ENCODE measurements at regions of chr4 and their contacts with region 1.

Region 1: DNA sequence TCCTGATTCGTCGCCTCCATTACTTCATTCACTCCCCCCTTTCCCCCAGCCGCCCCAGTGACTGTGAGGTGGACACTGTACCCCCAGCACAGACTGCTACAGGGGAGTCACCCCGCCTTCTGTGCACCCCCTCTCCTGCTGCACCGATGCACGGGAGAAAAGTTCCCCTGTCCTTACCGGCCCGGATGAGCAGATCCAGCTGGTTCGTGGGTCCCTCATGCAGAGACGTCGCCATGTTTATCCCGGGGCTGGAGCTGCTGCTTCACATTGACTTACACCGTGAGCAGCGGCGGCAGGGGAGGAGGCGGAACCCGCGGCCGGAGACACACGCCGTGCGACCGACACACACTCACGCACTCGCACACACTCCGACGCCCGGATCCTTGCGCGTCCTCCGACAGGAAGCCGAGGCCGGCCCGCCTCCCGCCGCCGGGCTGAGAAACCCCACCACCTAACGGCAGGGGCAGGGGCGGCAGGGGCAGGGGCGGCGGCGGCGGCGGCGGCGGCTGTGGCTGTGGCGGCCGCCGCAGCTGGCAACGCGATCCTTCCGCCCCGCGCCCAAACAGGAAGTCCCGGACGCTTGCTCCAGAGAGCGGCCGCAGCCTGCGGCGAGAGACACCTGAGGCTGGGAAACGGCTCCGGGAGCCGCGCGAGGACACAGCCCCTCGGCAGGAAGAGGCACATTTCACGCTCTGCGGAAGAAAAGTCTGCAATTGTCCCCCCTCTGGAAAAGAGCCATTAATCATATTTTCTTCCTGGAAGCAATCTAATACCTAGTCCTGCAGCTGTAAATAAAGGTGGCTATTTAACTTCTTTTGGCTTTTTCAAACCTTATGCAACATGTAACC is 68.6 kb downstream of the NOCT start:
- DNase-seq: peak; percentile 94
- H3K4me3 ChIP-seq: peak overlapping the region; percentile 70 to 92 (median 79)
- H3K27ac ChIP-seq: peak overlapping the region; percentile 92 to 97 (median 94)
- H3K4me1 ChIP-seq: peaks cover 0 to 43% (median 37%) of the 10 kb centered on the region in 4 donors
- H3K27me3 ChIP-seq: no peaks in the 10 kb centered on the region
- CTCF ChIP-seq: peak in 1 of 4 experiments; percentile 27
- EP300 ChIP-seq: no peak
- POLR2A ChIP-seq: peak; percentile 43 to 57

Region 2: DNA sequence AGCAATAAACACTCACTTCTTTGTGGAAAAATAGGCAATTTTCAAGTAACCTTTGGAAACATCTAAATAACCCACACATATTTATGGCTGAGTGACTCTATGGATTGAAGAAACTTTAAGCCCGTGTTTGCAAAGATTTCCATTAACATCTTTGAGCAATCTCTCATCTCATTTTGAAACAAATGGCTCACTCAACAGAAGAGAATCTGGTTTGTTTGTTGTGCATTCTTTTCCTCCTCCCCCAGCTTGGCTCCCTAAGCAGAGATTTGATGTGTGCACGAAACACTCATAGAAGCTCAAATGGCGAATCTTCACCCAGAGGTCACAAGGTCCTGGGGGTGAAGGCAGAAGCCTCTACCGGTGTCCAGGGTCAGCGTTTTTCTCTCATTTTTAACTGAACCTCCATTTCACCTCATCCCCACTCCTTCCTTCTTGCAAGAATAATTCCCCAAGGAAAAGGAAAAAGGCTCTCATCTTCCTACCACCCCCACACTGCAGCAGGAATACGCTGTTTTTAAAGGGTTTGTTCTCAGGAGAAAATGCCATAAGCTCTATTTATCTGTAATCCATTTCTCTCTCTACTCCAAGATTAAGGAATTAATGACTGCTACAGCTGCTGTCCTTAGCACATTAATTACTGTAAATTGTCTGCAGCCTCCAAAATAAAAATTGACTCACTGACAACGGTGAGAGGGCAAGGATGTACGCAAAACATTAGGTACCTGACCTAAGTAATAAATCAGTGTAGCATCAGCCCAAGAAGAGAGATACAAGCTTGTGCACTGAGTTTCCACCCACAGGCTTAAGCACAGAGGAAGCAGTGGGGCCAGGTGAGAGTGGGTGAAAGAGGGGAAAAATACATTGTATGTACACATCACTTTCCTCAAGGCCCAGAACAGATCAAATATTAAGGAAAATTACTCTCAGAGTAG is 376.2 kb before region 1 on chr4:
- intact Hi-C with region 1: no loop called
- DNase-seq: no peak
- H3K4me3 ChIP-seq: no peak overlapping the region
- H3K27ac ChIP-seq: no peak overlapping the region
- H3K4me1 ChIP-seq: no peaks in the 10 kb centered on the region
- H3K27me3 ChIP-seq: no peaks in the 10 kb centered on the region
- CTCF ChIP-seq: no peak
- EP300 ChIP-seq: no peak
- POLR2A ChIP-seq: no peak

Region 3: DNA sequence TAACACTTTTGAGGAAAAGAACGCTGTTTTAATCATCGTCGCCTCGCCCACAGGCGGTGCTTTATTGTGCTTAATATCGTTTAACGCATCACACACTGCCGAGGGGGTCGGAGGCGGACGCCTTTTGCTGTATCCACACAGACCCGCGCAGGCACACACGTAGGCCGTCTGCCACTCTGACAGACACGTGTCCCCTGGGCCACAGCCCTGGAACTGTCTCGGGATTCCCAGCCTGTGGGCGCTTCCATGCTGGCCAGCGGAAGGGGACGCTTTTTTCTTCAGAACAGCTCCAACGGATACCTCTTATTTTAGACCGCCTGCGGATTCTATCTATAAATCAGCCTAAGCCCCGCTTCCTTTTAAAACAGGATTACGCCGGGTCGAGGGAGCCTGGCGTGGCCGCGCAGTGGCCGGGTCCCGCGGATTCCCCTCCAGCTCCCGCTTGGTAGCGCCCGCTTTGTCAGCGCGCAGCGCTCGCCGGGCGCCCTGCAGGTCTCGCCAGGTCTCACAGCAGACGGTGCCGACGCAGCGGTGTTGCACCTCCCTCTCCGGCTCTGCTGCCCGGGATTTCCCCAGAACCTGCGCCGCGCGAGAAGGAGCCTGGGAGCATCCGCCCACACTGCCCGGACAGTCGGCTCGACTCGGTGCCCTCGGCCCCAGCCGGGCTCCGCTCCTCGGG is 68.8 kb before region 1 on chr4 and contains the start of gene NOCT:
- intact Hi-C with region 1: no loop called
- DNase-seq: peak; percentile 91
- H3K4me3 ChIP-seq: peak within 1 kb of the TSS; percentile 58 to 82 (median 68)
- H3K27ac ChIP-seq: peak within 1 kb of the TSS; percentile 79 to 93 (median 82)
- H3K4me1 ChIP-seq: peaks cover 0 to 29% (median 12%) of the 10 kb centered on the region in 4 donors
- H3K27me3 ChIP-seq: no peaks in the 10 kb centered on the region
- CTCF ChIP-seq: peak in 2 of 4 experiments; percentile 11 to 43
- EP300 ChIP-seq: no peak
- POLR2A ChIP-seq: peak; percentile 58 to 67
- total RNA-seq, gene NOCT: 1.8 to 5.4 (median 2.5) TPM

Region 4: GRCh38 chr4:139042981-139043460 is 41.2 kb before region 1 on chr4:
- intact Hi-C with region 1: loop called (anchors 5 kb)
- DNase-seq: peak; percentile 81
- H3K4me3 ChIP-seq: peak overlapping the region in 3 of 4 donors; percentile 11 to 33 (median 23)
- H3K27ac ChIP-seq: peak overlapping the region; percentile 64 to 78 (median 76)
- H3K4me1 ChIP-seq: peaks cover 0 to 14% (median 14%) of the 10 kb centered on the region in 4 donors
- H3K27me3 ChIP-seq: no peaks in the 10 kb centered on the region
- CTCF ChIP-seq: no peak
- EP300 ChIP-seq: no peak
- POLR2A ChIP-seq: no peak

Region 5: DNA sequence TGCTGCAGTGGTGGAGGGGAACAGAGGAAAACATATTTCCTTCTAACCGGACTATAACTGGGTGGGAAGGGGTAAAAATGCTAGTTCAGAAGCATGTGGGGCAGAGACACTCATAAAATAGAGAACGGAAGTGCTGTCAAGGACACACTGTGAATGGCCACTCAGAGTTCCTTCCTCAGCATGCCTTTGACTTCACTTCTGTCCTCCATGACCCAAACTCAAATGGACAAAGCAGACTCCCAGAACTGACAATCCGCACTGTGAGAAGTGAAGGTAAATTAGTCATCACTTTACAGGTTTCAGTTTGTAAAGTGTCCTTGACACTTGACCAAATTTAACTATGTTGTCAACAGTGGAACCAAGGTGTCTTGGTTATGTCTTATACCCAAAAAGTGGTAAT is 123.1 kb after region 1 on chr4:
- intact Hi-C with region 1: no loop called
- DNase-seq: no peak
- H3K4me3 ChIP-seq: no peak overlapping the region
- H3K27ac ChIP-seq: peak overlapping the region in 2 of 4 donors; percentile 39 to 41
- H3K4me1 ChIP-seq: peaks cover 0 to 6% (median 0%) of the 10 kb centered on the region in 4 donors
- H3K27me3 ChIP-seq: no peaks in the 10 kb centered on the region
- CTCF ChIP-seq: no peak
- EP300 ChIP-seq: no peak
- POLR2A ChIP-seq: no peak

Region 6: DNA sequence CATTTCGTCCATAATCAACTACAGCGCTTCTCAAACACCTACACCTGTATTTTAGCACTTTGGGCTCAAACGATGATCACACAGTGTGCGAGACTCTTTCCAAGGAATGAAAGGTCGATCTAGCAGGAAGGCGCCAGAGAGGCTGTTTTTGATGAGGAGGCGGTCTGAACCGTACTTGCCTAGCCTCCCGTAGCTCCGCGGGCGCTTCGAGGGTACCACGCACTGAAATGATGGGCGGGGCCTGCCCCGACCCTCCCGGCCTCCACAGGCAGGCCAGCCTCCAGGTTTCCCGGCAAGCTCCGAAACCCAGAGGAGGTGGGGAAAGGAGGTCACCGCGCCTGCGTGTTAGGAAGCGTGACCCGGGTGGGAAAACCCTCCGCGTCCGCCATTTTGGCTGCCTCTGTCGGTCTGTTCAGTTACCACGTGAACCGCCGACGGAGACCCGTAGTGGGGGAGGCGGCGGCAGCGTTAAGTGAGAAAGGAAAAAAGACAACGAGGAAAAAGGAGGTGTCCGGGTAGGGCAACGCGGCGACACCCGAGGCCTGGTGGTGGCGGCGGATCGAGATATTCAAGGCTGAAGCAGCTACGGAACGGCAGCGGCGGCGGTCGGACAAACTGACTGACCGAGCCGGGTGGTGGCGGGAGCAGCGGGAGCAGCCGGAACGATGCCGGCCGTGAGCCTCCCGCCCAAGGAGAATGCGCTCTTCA is 217.1 kb after region 1 on chr4 and contains the start of gene NAA15:
- intact Hi-C with region 1: loop called (anchors 2 kb)
- DNase-seq: peak; percentile 99
- H3K4me3 ChIP-seq: peak within 1 kb of the TSS; percentile 87 to 99 (median 96)
- H3K27ac ChIP-seq: peak within 1 kb of the TSS; percentile 93 to 98 (median 96)
- H3K4me1 ChIP-seq: peaks cover 0 to 60% (median 35%) of the 10 kb centered on the region in 4 donors
- H3K27me3 ChIP-seq: no peaks in the 10 kb centered on the region
- CTCF ChIP-seq: no peak
- EP300 ChIP-seq: peak in 1 of 4 donors; percentile 68
- POLR2A ChIP-seq: peak; percentile 87
- total RNA-seq, gene NAA15: 21.6 to 40.3 (median 28.9) TPM